HEK293T (cell line): ENCODE measurements at regions of chr4 and their contacts with region 1.

Region 1: GRCh38 chr4:55948726-55949474 is at the start of gene CEP135:
- DNase-seq: peak; percentile 95

Region 2: DNA sequence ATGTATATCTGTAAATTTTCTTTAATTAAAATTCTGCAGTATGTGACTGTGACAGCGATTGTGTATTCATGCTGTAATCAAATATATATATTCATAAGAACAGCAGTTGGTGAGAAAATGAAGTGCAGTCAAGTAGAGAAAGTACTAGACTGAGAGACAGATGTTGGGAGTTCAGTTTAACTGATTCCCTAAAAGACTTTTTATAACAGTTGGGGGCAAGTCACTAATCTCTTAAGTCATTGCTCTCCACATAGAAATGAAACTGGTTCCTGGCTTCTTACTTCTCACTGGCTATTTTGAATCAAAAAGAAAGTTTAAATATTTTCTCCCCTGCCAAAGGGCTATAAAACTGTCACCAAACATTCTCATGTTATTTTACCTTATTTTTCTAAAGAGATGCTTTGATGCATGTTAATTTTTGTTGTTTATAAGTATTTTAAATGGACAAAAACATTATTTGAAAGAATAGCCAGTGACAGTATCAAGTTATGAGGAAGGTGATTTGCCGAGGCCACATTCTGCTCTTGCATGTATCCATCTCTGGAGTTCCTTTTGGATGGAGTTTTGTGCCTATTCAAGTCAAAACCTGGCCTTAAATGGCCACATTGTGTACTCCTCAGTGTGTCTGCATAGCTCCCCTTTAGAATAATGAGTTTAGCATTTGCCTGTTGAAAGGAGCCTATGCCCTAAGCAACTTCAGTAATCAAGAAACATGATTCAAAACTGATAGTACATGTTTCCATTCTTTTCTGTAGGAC is 64.6 kb before region 1 on chr4:
- CTCF ChIA-PET with region 1: no interaction called
- POLR2A ChIA-PET with region 1: no interaction called
- DNase-seq: no peak

Region 3: DNA sequence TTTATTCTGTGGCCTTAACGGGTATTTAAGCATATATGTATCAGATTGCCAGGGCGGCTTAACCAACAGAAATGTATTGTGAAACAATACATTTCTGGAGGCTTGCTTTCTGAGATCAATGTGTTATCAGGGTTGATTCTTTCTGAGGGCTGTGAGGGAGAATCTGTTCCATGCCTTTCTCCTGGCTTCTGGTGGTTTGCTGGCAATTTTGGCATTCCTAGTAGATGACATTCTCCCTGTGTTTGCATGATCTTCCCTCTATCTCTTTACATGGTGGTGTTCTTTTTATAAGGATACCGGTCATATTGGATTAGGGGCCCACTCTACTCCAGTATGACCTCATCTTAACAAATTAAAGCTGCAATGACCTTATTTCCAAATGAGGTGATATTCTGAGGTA is 17.1 kb before region 1 on chr4:
- CTCF ChIA-PET with region 1: interaction called, 25 read pairs
- POLR2A ChIA-PET with region 1: interaction called, 11 read pairs
- DNase-seq: no peak